Activated naive CD4-positive, alpha-beta T cell treated with anti-CD3 and anti-CD28 coated beads for 36 hours (primary cell): ENCODE measurements at regions of chr11 and their contacts with region 1.

Region 1: DNA sequence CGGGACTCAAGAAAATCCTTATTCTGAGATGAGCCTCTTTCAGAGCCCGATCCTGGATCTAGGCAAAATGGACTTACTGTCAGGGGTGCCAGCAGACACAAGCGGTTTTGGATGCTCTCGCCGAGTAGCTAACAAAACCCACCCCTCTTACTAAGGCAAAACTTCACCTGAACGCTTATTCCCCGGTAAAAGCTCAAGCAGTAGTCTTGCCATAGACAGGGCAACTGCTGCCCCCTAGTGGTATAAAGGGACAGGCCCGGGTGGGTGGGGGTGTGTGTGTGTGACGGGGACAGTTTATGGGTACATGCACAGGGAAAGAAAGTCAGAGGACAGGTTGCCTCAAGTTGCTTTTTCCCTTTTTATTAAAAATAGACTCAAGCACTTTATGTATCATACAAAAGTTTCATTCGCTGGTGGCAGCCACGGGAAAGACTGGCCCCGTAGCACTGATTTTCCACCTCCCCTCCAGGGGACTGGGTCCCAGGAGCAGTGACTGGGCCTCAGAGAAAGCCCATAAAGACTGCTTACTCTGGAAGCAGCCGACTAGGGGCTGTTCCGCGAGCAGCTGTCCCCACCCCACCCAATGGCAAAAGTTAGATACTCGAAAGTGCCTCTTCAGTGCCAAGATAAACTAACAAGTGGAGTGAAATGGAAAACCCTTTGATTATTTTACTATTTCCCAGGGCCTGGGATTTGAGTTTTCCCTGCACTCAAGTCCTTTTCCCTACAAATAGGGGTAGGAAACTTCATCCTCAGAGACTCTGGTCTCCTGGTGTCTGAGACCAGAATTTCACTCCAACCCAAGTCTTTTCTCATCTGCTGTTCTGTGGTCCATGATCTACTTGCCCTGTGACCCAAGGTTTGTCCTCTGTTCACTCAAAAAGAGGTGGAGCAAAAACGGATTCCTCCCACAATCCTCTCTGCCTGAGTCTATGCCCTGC is 4.7 kb downstream of the YPEL4 start:
- DNase-seq: peak; percentile 94
- H3K4me3 Mint-ChIP-seq: no peak overlapping the region
- H3K27ac Mint-ChIP-seq: no peak overlapping the region
- H3K4me1 Mint-ChIP-seq: peaks cover 35% of the 10 kb centered on the region
- H3K27me3 Mint-ChIP-seq: peaks cover 39% of the 10 kb centered on the region

Region 2: DNA sequence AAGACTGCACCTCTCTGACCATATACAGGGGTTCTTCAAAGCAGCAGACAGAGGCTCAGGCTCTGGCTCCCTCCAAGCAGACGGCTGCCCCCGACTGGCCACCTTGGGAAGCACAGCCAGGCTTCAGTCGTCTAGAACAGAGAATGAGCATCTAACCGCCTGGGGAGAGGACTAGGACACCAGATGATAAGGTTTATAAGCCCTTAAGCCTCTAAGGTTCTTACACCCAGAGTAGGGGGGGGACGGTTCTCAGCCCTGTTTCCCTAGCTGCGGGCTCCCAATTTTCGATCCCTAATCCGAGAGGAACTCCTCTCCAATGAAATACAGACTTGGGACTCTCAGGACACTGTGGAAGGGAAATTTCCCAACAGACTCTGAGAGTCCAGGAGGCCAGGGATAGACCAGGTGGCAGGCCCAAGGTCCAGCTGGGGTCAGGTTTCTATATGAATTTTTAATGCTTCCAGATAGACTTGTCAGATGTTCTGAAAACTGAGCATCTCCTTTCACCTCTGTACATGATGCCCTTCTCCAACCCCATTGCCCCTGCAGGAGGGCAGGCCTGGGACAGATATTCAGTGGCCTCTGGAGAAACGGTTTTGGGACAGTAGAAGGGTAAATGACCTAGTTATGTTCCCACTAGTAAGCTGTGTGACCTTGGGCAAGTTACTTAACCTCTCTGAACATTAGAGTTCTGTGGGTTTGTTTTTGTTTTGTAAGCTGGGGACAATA is 164.4 kb before region 1 on chr11:
- CTCF ChIA-PET with region 1: interaction called, 17 read pairs
- intact Hi-C with region 1: no loop called
- DNase-seq: peak; percentile 87
- H3K4me3 Mint-ChIP-seq: no peak overlapping the region
- H3K27ac Mint-ChIP-seq: no peak overlapping the region
- H3K4me1 Mint-ChIP-seq: peaks cover 22% of the 10 kb centered on the region
- H3K27me3 Mint-ChIP-seq: peaks cover 16% of the 10 kb centered on the region

Region 3: DNA sequence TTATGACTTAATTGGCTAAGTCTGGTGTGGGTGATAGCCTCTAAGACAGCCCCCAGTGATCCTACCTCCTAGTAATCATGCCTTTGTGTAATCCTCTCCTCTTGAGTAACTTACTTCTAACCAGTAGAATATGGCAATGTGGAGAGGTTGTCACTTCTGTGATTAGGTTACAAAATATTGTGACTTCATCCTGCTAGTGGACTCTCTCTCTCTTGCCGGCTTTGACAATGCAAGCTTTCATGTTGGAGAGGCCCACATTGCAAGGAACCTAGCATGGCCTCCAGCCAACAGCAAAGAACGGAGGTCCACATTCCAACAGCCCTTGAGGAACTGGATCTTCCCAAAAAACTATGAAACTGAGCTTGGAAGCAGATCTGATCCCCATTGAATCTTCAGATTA is 14.8 kb before region 1 on chr11:
- CTCF ChIA-PET with region 1: interaction called, 26 read pairs
- intact Hi-C with region 1: no loop called
- DNase-seq: no peak
- H3K4me3 Mint-ChIP-seq: no peak overlapping the region
- H3K27ac Mint-ChIP-seq: no peak overlapping the region
- H3K4me1 Mint-ChIP-seq: no peaks in the 10 kb centered on the region
- H3K27me3 Mint-ChIP-seq: peaks cover 12% of the 10 kb centered on the region

Region 4: DNA sequence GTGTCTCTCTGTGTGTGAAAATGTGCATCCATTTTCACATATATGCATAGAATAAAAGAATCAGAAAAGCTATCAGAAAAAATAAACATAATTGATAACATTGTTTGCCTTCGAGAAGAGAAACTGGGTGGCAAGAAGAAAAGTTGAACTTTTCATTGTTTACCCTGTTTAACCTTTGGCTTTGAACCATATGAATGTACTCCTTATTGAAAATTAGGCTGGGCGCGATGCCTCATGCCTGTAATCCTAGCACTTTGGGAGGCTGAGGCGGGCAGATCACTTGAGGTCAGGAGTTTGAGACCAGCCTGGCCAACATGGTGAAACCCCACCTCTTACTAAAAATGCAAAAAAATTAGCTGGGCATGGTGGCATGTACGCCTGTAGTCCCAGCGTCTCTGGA is 366.8 kb after region 1 on chr11:
- CTCF ChIA-PET with region 1: no interaction called
- intact Hi-C with region 1: no loop called
- DNase-seq: no peak
- H3K4me3 Mint-ChIP-seq: no peak overlapping the region
- H3K27ac Mint-ChIP-seq: no peak overlapping the region
- H3K4me1 Mint-ChIP-seq: no peaks in the 10 kb centered on the region
- H3K27me3 Mint-ChIP-seq: no peaks in the 10 kb centered on the region